AG04449 (cell line): ENCODE measurements at regions of chr17 and their contacts with region 1.

Region 1: DNA sequence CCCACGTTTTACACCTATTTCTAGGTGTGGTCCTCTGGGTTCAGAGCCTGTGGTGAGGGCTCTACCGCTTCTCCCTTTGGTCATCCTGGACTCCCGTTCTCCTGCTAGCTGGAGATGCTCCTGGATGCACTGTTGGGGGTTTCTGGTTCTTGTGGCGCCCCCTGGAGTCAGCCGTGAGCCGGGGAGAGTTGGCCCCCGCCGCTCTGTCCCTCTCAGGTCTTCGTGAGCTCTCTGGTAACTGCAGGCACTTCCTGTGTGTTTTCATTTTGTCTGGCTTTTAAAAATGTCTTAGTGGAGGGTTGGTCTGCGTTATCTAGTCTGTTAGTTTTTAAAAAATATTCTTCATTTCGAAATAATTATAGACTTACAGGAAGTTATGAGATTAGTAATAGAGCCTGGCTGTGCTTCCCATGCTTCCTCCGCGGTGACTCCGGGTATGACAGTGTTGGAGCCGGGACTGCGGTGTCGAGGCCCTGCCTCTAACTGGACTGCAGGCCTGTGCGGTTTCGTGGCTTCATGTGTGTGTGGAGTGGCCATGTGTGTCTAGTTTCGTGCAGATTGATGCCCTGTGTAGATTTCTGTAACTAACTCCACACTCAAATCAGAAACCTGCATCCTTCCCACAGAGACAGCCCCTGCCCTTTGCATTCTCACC is 78.0 kb upstream of the ZNF750 start:
- DNase-seq: no peak
- H3K4me3 ChIP-seq: no peak overlapping the region
- CTCF ChIP-seq: peak; percentile 62

Region 2: GRCh38 chr17:82781894-82782274 is 135.9 kb before region 1 on chr17:
- CTCF ChIA-PET with region 1: interaction called, 52 read pairs
- POLR2A ChIA-PET with region 1: no interaction called
- DNase-seq: no peak
- H3K4me3 ChIP-seq: no peak overlapping the region
- CTCF ChIP-seq: peak; percentile 99

Region 3: DNA sequence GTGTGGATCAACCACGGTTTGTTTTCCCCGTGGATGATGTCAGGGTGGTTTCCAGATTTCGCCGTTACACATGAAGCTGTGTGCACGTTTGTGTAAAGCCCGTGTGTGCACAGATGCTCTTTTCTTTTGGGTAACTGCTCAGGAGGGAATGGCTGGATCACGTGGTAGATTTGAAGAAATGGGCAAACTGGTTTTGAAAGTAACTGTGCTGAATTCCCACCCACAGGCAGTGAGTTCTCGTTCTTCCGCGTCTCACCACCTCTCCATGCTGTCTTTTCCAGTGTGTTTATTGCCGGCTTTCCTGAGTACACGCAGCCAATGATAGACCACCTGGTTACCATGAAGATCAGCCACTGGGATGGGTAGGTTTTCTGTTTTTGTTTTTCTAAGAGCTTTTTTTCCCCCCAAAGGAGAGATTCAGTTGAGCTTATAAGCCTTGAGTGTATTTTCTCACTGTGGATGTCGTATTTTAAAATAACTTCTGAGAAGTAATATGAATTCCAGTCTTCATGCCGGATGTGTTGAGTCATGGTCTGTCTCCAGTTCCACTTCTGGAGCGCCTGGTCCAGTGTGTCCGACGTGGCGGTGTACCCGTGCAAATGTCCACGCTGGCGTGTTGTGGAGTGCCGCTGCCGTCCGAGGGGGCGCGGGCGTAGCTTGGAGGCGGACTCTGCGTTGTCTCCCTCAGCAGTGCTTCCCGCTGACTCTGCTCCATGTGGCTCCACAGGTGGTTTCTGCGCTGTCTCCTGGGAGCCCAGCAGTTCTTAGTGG is 17.3 kb before region 1 on chr17:
- CTCF ChIA-PET with region 1: interaction called, 12 read pairs
- POLR2A ChIA-PET with region 1: no interaction called
- DNase-seq: no peak
- H3K4me3 ChIP-seq: no peak overlapping the region
- CTCF ChIP-seq: no peak

Region 4: DNA sequence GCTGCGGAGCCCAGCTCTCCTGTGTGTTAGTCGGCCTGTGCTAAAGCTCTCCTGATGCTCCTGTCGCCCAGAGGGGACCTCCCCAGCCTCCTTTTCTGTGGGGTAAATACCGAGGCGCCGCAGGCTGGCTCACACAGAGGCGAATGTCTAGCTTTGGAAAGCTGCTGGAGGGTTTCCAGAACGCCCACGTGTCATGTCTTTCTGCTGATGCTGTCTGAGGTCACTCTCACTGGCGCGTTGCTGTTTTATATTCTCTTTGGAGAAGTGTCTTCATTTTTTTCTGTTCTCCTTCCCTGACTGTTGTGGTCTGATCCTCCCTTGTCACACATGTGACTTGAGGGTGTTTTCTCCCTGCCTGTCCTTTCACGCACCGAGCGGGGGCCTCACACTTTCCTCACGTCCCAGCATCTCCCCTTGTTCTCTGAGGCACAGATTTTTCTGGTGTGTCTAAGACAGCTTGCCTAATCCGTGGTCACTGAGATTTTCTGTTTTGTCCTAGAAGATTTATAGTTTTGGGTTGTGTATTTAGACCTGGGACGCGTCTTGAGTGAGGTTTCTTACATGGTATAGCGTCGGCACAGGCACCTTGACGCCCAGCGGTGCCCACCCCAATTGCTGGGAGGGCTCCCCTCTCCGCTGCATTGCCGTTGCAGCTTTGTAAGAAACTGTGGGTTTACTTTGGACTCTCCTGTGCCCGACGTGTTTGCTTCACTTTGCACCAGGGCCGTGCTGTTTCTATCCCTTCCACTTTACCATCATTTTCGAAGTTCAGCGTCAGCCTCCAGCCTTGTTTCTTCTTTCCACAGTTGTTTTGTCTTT is 14.1 kb after region 1 on chr17:
- CTCF ChIA-PET with region 1: interaction called, 28 read pairs
- POLR2A ChIA-PET with region 1: interaction called, 3 read pairs
- DNase-seq: peak; percentile 55
- H3K4me3 ChIP-seq: no peak overlapping the region
- CTCF ChIP-seq: no peak